ENCODE measurements at regions of chr2 and their contacts with region 1.

Region 1: DNA sequence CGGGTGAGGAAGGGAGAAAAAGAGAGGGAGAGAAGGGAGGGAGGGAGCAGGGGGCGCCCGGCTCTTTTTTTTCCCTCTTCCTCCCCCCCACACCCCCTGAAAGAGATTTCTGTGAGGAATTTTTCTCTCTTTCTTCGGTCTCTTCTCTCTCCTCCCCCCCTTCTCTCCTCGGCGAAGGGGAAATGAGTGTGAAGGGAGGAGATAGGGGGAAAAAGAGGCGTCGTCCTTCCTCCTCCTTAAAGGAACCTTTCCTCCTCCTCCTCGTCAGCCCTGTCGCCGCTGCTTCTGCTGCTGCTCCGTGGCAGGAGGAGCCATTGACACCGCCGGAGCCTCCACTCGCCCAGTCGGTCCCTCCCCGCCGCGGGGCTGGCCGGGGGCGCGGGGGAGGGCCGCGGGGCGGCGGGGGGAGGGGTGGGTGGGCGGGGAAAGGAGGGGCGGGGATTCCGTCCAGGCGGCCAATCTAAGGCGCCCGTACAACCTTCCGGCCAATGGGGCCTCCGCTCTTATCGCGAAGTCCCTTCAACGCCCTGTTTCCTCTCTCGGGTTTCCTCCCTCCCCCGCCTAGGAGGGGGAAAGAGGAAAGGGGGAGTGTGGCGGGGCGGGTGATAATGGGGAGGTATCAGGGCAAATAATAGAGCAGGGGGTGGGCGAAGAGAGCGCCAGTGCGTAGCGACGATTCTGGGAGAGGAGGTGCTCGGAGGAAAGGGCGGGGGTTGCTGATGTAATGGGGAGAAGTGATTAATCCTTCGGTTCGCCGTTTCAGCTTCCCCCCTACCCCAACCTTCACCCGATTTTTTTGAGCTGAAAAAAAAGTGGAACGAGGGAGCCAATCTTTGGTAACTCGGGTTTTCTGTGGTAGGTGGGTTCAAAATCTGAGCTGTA is at the start of gene FBXO11:
- DNase-seq: peak; percentile 94
- H3K4me3 ChIP-seq: peak within 1 kb of the TSS; percentile 74 to 98
- H3K27ac ChIP-seq: peak within 1 kb of the TSS; percentile 96 to 100
- H3K4me1 ChIP-seq: peaks cover 7 to 14% of the 10 kb centered on the region in 2 experiments; a peak in 2 of 4 replicates
- H3K27me3 ChIP-seq: no peaks in the 10 kb centered on the region
- CTCF ChIP-seq: peak; percentile 79
- EP300 ChIP-seq: peak in 1 of 2 experiments; percentile 7; a peak in 1 of 4 replicates
- RAD21 ChIP-seq: no peak; the same call in none of the 2 replicates
- polyA plus RNA-seq, gene FBXO11: 26.6 and 29.0 TPM in 2 replicates

Region 2: DNA sequence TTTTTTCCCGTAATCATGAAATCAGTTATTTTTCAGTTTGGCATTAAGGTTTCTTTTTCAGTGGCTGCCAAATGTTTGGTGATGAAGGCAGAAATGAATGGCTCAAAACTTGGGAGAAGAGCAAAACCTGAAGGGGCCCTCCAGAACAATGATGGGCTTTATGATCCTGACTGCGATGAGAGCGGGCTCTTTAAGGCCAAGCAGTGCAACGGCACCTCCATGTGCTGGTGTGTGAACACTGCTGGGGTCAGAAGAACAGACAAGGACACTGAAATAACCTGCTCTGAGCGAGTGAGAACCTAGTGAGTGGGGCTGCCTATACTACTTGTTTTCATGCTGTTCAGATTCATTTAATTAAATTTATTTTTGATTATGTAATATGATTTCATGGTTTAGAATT is 532.7 kb before region 1 on chr2:
- CTCF ChIA-PET with region 1: no interaction called
- POLR2A ChIA-PET with region 1: no interaction called
- DNase-seq: peak; percentile 71
- H3K4me3 ChIP-seq: no peak overlapping the region
- H3K27ac ChIP-seq: no peak overlapping the region
- H3K4me1 ChIP-seq: peaks cover 0 to 4% of the 10 kb centered on the region in 2 experiments; a peak in 1 of 4 replicates
- H3K27me3 ChIP-seq: peaks cover 1% of the 10 kb centered on the region; the same call in 1 of the 2 replicates
- CTCF ChIP-seq: peak; percentile 49
- EP300 ChIP-seq: no peak
- RAD21 ChIP-seq: peak; percentile 77

Region 3: DNA sequence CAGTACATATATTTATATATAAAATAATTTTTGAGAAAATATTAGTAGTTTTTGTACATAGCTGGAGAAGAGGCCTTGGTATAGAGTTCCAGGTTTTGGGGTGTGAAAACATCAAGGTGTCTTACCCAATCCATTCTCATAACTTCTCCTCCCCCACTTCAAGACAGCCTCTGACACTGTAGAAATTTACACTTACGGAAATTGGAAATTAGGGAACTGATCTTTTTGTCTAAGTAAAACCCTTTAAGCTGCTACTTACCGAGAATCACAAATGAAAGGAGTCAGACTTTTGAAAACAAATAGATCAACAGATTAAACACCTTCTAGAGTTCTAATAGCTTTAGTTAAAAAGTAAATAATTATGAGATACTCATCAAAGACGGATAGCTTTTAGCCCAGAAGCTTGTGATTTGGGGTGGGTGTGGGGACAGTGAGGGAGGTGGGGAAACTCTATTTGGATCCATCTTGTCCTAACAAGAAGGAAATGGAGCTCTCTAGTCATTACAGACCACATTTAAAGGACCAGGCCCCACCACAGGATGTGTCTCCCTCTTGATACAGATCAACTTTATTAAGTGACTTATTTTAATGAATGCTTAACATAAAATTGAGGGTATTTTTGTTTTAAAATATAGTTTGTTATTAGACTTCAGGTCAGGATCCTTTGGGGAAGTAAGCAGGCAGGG is 11.0 kb after region 1 on chr2:
- CTCF ChIA-PET with region 1: interaction called, 17 read pairs
- POLR2A ChIA-PET with region 1: interaction called, 5 read pairs
- DNase-seq: no peak
- H3K4me3 ChIP-seq: no peak overlapping the region
- H3K27ac ChIP-seq: no peak overlapping the region
- H3K4me1 ChIP-seq: peaks cover 0 to 7% of the 10 kb centered on the region in 2 experiments; a peak in 2 of 4 replicates
- H3K27me3 ChIP-seq: no peaks in the 10 kb centered on the region
- CTCF ChIP-seq: no peak
- EP300 ChIP-seq: no peak
- RAD21 ChIP-seq: no peak

Region 4: DNA sequence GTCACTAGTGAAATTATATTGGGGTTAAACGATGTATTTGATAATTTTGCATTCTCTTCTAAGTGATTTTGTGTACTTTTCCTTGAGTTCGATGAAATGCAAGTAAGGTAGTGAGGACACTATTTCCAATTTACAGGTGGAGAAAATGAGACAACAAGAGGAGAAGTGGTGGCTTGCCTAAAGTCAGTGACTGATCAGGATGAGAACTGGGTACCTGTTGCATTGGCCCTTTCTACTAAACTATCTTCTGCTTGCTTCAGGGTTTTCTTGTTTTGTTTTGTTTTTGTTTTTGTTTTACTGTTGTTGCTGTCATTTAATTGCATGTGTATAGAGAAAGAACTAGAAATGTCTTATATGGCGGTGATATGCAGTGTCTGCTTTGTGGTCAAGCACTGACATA is 31.3 kb after region 1 on chr2:
- CTCF ChIA-PET with region 1: no interaction called
- POLR2A ChIA-PET with region 1: no interaction called
- DNase-seq: no peak
- H3K4me3 ChIP-seq: no peak overlapping the region
- H3K27ac ChIP-seq: no peak overlapping the region
- H3K4me1 ChIP-seq: no peaks in the 10 kb centered on the region
- H3K27me3 ChIP-seq: no peaks in the 10 kb centered on the region
- CTCF ChIP-seq: no peak
- EP300 ChIP-seq: no peak
- RAD21 ChIP-seq: no peak

Region 5: DNA sequence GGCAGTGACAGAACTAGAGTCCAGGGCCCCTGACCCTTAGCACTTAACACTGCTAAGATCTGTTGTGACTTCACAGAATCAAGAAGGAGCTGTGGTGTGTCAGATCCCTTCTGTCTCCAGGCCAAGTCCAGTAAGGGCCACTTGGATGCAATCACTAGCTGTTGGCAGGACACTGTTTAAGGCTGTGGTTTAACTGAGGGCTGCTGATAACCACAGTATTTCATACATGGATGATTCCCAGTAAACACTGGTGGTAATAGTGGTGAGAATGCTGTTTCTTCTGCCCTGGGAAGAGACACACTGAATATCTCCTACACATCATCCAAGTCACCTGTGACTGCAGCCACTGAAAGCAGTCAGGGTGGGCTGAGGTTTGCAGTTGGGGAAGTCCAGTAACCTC is 77.6 kb after region 1 on chr2:
- CTCF ChIA-PET with region 1: no interaction called
- POLR2A ChIA-PET with region 1: no interaction called
- DNase-seq: no peak
- H3K4me3 ChIP-seq: no peak overlapping the region
- H3K27ac ChIP-seq: no peak overlapping the region
- H3K4me1 ChIP-seq: no peaks in the 10 kb centered on the region
- H3K27me3 ChIP-seq: peaks cover 5% of the 10 kb centered on the region; the same call in 1 of the 2 replicates
- CTCF ChIP-seq: no peak
- EP300 ChIP-seq: no peak
- RAD21 ChIP-seq: no peak